Activated B cell treated with CpG ODN at 0.5 μM for 24 hours (primary cell): ENCODE measurements at regions of chr13 and their contacts with region 1.

Region 1: DNA sequence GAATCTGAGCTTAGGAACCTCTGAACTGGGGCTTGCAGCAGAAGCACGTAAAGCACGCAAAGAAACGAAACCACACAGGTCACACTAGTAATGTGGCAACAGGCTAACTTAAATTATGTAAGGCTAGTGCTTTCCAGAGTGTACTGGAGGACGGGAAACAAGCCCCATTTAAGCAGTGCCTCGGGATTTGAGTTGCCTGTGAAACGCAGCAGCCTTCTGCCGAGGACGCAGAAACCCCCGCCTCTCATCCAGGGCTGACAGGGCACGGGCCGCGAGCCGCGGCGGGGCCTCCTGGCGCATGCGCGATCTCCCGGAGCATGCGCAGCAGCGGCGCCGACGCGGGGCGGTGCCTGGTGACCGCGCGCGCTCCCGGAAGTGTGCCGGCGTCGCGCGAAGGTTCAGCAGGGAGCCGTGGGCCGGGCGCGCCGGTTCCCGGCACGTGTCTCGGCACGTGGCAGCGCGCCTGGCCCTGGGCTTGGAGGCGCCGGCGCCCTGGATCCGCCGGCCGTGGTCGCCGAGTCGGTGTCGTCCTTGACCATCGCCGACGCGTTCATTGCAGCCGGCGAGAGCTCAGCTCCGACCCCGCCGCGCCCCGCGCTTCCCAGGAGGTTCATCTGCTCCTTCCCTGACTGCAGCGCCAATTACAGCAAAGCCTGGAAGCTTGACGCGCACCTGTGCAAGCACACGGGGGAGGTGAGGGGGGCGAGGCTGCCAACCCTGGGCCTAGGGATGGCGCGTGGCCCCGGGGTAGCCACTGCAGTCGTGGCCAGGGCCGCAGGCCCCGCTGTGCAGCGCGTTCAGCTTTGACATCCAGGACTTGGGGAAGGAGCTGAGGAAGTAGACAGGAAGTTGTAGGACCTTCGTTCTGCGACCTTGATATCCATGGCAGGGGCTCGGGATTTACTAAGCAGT is at the start of gene GTF3A:
- DNase-seq: peak; percentile 91
- ATAC-seq: peak; percentile 72
- H3K4me3 Mint-ChIP-seq: peak within 1 kb of the TSS; percentile 79
- H3K27ac Mint-ChIP-seq: peak within 1 kb of the TSS; percentile 86
- H3K4me1 Mint-ChIP-seq: peaks cover 42% of the 10 kb centered on the region
- H3K27me3 Mint-ChIP-seq: no peaks in the 10 kb centered on the region
- CTCF ChIP-seq: no peak
- total RNA-seq, gene GTF3A: 119 and 134 TPM in 2 replicates

Region 2: GRCh38 chr13:26996965-26997752 is 427.3 kb before region 1 on chr13:
- CTCF ChIA-PET with region 1: no interaction called
- POLR2A ChIA-PET with region 1: no interaction called
- intact Hi-C with region 1: no loop called
- DNase-seq: no peak
- ATAC-seq: peak; percentile 83
- H3K4me3 Mint-ChIP-seq: peak overlapping the region; percentile 49
- H3K27ac Mint-ChIP-seq: peak overlapping the region; percentile 21
- H3K4me1 Mint-ChIP-seq: peaks cover 56% of the 10 kb centered on the region
- H3K27me3 Mint-ChIP-seq: no peaks in the 10 kb centered on the region
- CTCF ChIP-seq: no peak

Region 3: GRCh38 chr13:27147530-27148170 is 276.9 kb before region 1 on chr13:
- CTCF ChIA-PET with region 1: no interaction called
- POLR2A ChIA-PET with region 1: no interaction called
- intact Hi-C with region 1: no loop called
- DNase-seq: peak; percentile 48
- ATAC-seq: peak; percentile 90
- H3K4me3 Mint-ChIP-seq: peak overlapping the region; percentile 81
- H3K27ac Mint-ChIP-seq: peak overlapping the region; percentile 99
- H3K4me1 Mint-ChIP-seq: peaks cover 92% of the 10 kb centered on the region
- H3K27me3 Mint-ChIP-seq: no peaks in the 10 kb centered on the region
- CTCF ChIP-seq: no peak

Region 4: DNA sequence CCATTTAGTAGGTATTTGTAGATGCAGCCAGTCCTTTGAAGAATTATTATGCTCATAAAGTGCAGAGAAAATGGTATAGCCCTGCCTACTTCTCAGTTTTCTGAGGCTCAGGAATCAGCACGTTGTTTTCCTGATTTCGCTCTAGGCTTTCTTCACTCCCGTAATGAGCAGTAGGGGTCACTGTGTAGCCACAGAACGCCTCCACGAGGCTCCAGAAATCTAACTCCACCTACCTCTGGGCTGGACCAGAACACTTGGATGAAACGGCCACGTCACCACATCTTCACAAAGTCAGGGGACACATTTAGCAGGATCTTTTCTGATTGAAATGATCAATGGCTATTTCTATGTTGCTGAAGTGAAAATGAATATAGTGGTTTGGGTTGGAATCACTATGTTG is 49.9 kb before region 1 on chr13:
- CTCF ChIA-PET with region 1: no interaction called
- POLR2A ChIA-PET with region 1: no interaction called
- intact Hi-C with region 1: loop called (anchors 1 kb)
- DNase-seq: no peak
- ATAC-seq: peak; percentile 88
- H3K4me3 Mint-ChIP-seq: no peak overlapping the region
- H3K27ac Mint-ChIP-seq: no peak overlapping the region
- H3K4me1 Mint-ChIP-seq: peaks cover 2% of the 10 kb centered on the region
- H3K27me3 Mint-ChIP-seq: peaks cover 22% of the 10 kb centered on the region
- CTCF ChIP-seq: peak; percentile 75

Region 5: DNA sequence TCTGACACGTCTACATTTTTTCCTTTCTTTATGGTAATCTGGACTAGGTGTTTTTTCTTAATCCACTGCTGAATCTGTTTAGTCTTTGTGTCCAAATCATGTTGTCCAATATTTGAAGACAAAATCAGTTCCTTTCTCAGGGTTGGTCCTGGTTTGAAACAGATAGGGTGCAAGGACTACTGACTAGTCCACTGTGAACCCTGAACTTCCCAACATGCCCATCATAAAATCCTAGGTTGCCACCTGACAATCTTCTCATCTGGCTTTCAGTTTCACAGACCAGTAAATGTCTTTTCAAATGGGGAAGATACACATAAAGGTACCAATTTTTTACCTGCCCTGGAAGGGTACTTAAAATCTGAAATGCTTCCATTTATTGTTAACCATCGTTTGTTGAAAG is 12.6 kb after region 1 on chr13:
- CTCF ChIA-PET with region 1: interaction called, 28 read pairs
- POLR2A ChIA-PET with region 1: interaction called, 44 read pairs
- intact Hi-C with region 1: loop called (anchors 1 kb)
- DNase-seq: no peak
- ATAC-seq: no peak
- H3K4me3 Mint-ChIP-seq: no peak overlapping the region
- H3K27ac Mint-ChIP-seq: no peak overlapping the region
- H3K4me1 Mint-ChIP-seq: peaks cover 32% of the 10 kb centered on the region
- H3K27me3 Mint-ChIP-seq: no peaks in the 10 kb centered on the region
- CTCF ChIP-seq: no peak

Region 6: GRCh38 chr13:27449936-27450828 is 25.7 kb after region 1 on chr13 and contains the start of gene MTIF3:
- CTCF ChIA-PET with region 1: interaction called, 28 read pairs
- POLR2A ChIA-PET with region 1: interaction called, 185 read pairs
- intact Hi-C with region 1: loop called (anchors 1 kb)
- DNase-seq: peak; percentile 89
- ATAC-seq: peak; percentile 81
- H3K4me3 Mint-ChIP-seq: peak within 1 kb of the TSS; percentile 96
- H3K27ac Mint-ChIP-seq: peak within 1 kb of the TSS; percentile 98
- H3K4me1 Mint-ChIP-seq: peaks cover 69% of the 10 kb centered on the region
- H3K27me3 Mint-ChIP-seq: no peaks in the 10 kb centered on the region
- CTCF ChIP-seq: no peak
- total RNA-seq, gene MTIF3: 39.8 and 50.1 TPM in 2 replicates

Region 7: GRCh38 chr13:27481766-27482165 is 57.3 kb after region 1 on chr13:
- CTCF ChIA-PET with region 1: interaction called, 13 read pairs
- POLR2A ChIA-PET with region 1: interaction called, 32 read pairs
- intact Hi-C with region 1: loop called (anchors 1 kb)
- DNase-seq: no peak
- ATAC-seq: no peak
- H3K4me3 Mint-ChIP-seq: no peak overlapping the region
- H3K27ac Mint-ChIP-seq: peak overlapping the region; percentile 95
- H3K4me1 Mint-ChIP-seq: peaks cover 63% of the 10 kb centered on the region
- H3K27me3 Mint-ChIP-seq: no peaks in the 10 kb centered on the region
- CTCF ChIP-seq: no peak